GM12878 (cell line): ENCODE measurements at regions of chr17 and their contacts with region 1.

Region 1: GRCh38 chr17:17836250-17836817 is 452 bp downstream of the SREBF1 start:
- DNase-seq: peak; percentile 85
- ATAC-seq: peak; percentile 70
- H3K4me3 ChIP-seq: peak overlapping the region; percentile 79
- H3K27ac ChIP-seq: peak overlapping the region; percentile 78
- H3K4me1 ChIP-seq: peaks cover 50% of the 10 kb centered on the region
- H3K27me3 ChIP-seq: no peaks in the 10 kb centered on the region
- CTCF ChIP-seq: no peak
- EP300 ChIP-seq: no peak
- POLR2A ChIP-seq: peak; percentile 98
- RAD21 ChIP-seq: no peak

Region 2: GRCh38 chr17:17681187-17681848 is 155.0 kb before region 1 on chr17 and contains the start of gene RAI1:
- CTCF ChIA-PET with region 1: interaction called, 5 read pairs
- POLR2A ChIA-PET with region 1: interaction called, 19 read pairs
- RAD21 ChIA-PET with region 1: interaction called, 7 read pairs
- SMC1A ChIA-PET with region 1: interaction called, 3 read pairs
- in situ Hi-C with region 1: no loop called
- intact Hi-C with region 1: no loop called
- DNase-seq: no peak
- ATAC-seq: peak; percentile 41
- H3K4me3 ChIP-seq: peak within 1 kb of the TSS; percentile 99
- H3K27ac ChIP-seq: peak within 1 kb of the TSS; percentile 90
- H3K4me1 ChIP-seq: peaks cover 30% of the 10 kb centered on the region
- H3K27me3 ChIP-seq: no peaks in the 10 kb centered on the region; a peak in 1 of 4 replicates
- CTCF ChIP-seq: peak; percentile 48 to 80 (median 63); a peak in 5 of 6 replicates
- EP300 ChIP-seq: no peak
- POLR2A ChIP-seq: no peak; the same call in 1 of the 2 replicates
- RAD21 ChIP-seq: peak; percentile 84
- polyA plus RNA-seq, gene RAI1: 0.66 to 0.74 TPM

Region 3: DNA sequence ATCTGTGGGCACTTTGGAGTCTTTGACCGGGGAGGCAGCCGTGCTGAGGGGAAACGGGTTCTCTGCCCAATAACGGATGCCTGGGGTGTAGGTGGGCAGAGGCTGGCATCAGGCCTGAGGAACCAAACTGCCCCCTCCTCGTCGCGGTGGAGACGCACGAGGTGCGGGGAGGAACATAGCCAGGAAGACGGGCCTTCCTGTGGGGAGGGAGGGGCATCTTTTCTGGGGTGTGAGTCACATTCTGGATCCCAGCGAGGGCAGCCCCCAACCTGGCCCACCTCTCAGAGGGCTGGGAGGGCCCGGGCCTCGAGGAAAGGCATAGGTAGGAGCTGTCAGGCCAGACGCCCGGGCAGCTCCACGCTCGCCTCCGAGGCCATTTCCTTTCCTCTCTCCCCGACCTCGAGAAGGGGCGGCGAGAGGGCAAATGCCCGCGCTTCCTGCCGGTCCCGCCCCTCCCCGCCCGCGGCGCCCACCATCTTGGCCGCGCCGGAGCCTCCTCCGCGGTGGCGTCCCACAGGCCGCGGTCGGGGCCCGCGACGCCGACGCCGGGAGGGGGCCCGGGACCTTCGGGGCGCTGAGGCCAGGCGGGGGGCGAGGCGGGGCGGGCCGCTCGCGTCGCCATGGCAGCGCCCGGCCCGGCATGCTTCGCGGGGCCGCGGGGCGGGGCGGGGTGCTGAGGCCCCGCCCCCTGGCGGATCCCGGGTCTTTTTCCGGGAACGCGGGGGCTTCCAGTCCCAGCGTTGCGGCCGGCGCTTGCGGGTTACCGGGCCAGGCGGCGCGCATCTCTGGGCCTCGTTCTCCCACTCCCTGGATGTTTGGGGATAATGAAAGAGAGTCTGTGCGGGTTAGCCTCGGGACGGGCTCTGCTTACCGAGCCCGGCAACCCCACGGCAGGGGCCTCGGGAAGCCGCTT is 141.9 kb before region 1 on chr17:
- CTCF ChIA-PET with region 1: interaction called, 6 read pairs
- POLR2A ChIA-PET with region 1: interaction called, 21 read pairs
- RAD21 ChIA-PET with region 1: interaction called, 14 read pairs
- SMC1A ChIA-PET with region 1: interaction called, 5 read pairs
- in situ Hi-C with region 1: no loop called
- intact Hi-C with region 1: loop called (anchors 5 kb)
- DNase-seq: no peak
- ATAC-seq: peak; percentile 51
- H3K4me3 ChIP-seq: peak overlapping the region; percentile 86
- H3K27ac ChIP-seq: peak overlapping the region; percentile 77
- H3K4me1 ChIP-seq: peaks cover 55% of the 10 kb centered on the region
- H3K27me3 ChIP-seq: no peaks in the 10 kb centered on the region
- CTCF ChIP-seq: no peak
- EP300 ChIP-seq: no peak
- POLR2A ChIP-seq: peak; percentile 59
- RAD21 ChIP-seq: no peak

Region 4: DNA sequence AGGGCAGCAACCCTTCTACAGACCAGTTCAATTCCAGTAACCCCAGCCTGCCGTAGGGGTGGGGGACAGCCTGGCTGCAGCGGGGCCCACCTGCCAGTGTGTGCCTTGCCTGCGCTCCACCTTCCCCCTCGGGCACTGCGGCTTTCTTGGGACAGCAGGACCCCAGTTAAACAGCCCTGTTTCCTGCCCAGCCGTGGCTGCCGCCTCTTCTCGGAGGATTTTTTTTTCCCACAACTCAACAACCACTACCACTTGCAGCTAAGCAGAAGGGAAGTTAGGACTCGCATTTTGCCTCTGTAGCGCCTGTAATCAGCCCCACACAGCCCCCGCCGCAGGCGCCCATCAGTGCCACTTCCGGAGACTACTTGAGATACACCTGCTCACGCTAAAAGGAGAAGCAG is 78.9 kb before region 1 on chr17:
- CTCF ChIA-PET with region 1: no interaction called
- POLR2A ChIA-PET with region 1: no interaction called
- RAD21 ChIA-PET with region 1: no interaction called
- SMC1A ChIA-PET with region 1: no interaction called
- in situ Hi-C with region 1: no loop called
- intact Hi-C with region 1: no loop called
- DNase-seq: no peak
- ATAC-seq: peak; percentile 50
- H3K4me3 ChIP-seq: peak overlapping the region; percentile 32; the same call in 1 of the 2 replicates
- H3K27ac ChIP-seq: peak overlapping the region; percentile 52
- H3K4me1 ChIP-seq: peaks cover 22% of the 10 kb centered on the region
- H3K27me3 ChIP-seq: no peaks in the 10 kb centered on the region
- CTCF ChIP-seq: no peak
- EP300 ChIP-seq: no peak
- POLR2A ChIP-seq: no peak
- RAD21 ChIP-seq: no peak

Region 5: DNA sequence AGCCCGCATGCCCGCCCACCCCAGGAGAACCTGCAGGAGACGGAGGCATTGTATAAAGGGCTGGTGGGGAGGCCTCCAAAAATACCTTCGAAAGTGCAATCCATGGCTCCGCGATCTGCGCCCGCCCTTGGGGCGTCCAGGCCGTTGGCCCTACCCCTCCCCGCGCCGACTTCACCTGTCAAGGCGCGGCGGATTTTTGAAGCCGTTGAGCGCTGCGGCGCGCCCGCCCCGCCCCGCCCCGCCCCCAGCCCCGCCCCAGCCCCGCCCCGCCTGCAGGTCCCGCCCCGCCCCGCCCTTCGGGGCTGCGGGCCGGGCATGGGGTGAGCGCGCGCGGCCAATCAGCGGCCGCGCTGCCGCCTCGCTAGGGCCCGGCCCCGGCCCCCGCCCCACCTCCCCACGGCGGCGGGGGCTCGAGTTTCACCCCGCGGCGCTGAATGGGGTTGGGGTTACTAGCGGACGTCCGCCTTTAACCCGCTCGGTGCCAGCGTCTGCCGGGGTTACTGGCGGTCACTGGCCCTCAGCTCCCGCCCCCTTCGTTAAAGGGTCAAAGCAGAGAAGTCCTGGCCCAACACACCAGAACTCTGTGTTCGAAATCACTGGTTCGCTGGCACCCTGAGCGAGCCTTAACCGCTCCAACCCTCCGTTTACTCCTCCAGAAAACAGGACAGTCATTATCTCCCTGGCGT is 12.8 kb before region 1 on chr17:
- CTCF ChIA-PET with region 1: interaction called, 6 read pairs
- POLR2A ChIA-PET with region 1: interaction called, 163 read pairs
- RAD21 ChIA-PET with region 1: interaction called, 105 read pairs
- SMC1A ChIA-PET with region 1: interaction called, 46 read pairs
- in situ Hi-C with region 1: no loop called
- intact Hi-C with region 1: loop called (anchors 2 kb)
- DNase-seq: no peak
- ATAC-seq: peak; percentile 84
- H3K4me3 ChIP-seq: peak overlapping the region; percentile 63
- H3K27ac ChIP-seq: peak overlapping the region; percentile 82
- H3K4me1 ChIP-seq: peaks cover 52% of the 10 kb centered on the region
- H3K27me3 ChIP-seq: no peaks in the 10 kb centered on the region
- CTCF ChIP-seq: no peak
- EP300 ChIP-seq: no peak
- POLR2A ChIP-seq: peak; percentile 50; the same call in 1 of the 2 replicates
- RAD21 ChIP-seq: no peak

Region 6: GRCh38 chr17:17859909-17860765 is 23.8 kb after region 1 on chr17:
- CTCF ChIA-PET with region 1: interaction called, 7 read pairs
- POLR2A ChIA-PET with region 1: interaction called, 4 read pairs
- RAD21 ChIA-PET with region 1: interaction called, 7 read pairs
- SMC1A ChIA-PET with region 1: interaction called, 28 read pairs
- in situ Hi-C with region 1: no loop called
- intact Hi-C with region 1: no loop called
- DNase-seq: no peak
- ATAC-seq: peak; percentile 99
- H3K4me3 ChIP-seq: no peak overlapping the region
- H3K27ac ChIP-seq: no peak overlapping the region
- H3K4me1 ChIP-seq: no peaks in the 10 kb centered on the region
- H3K27me3 ChIP-seq: no peaks in the 10 kb centered on the region
- CTCF ChIP-seq: peak; percentile 98; a peak in 5 of 6 replicates
- EP300 ChIP-seq: no peak
- POLR2A ChIP-seq: no peak
- RAD21 ChIP-seq: peak; percentile 96